ENCODE measurements at regions of chrX and their contacts with region 1.

Region 1: GRCh38 chrX:154298312-154298711 is 2.7 kb downstream of the TKTL1 start:
- DNase-seq: no peak
- CTCF ChIP-seq: no peak

Region 2: GRCh38 chrX:154308108-154308946 is 10.0 kb after region 1 on chrX:
- CTCF ChIA-PET with region 1: interaction called, 19 read pairs
- POLR2A ChIA-PET with region 1: no interaction called
- DNase-seq: peak; percentile 58
- CTCF ChIP-seq: peak; percentile 50